Activated naive CD4-positive, alpha-beta T cell treated with anti-CD3 and anti-CD28 coated beads for 36 hours (primary cell): ENCODE measurements at regions of chr12 and their contacts with region 1.

Region 1: DNA sequence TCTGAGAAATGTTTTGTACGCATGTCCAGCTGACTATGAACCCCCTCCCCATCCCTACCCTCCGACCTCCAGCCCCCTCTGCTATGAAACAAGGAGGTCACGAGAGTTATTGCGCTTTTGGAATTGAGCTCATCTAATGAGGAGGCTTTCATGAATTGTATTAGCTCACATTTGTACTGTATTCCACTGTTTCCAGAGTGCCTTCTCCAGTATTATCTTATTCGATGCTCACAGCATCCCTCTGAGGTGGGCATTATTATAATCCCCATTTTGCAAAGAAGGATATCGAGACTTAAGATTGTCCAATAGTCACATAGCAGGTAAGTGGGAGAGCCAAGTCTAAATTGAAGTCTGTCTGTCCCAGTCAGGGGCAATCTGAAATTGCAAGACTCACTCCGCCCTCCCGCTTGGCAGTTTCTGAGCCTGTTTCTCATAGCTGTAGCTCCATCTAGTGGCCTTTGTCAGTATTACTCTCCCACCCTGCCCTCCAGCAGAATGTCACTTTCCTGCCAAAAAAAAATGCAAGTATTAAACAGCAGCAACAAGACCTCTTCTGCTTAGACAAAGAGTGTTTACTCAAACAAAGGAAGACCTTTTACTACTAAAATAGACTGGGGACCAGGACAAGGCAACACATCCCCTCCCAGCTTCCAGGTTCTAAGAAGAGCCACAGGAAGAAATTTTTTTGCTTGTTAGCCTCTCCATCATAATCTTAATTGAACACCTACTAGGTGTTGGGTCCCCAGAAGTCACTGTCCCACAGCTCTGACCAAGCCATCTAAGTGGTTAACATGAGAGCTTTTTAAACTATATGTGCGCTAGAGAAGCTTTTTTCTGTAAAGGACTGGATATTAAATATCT is 48.6 kb upstream of the TMEM233 start:
- DNase-seq: peak; percentile 73
- H3K4me3 Mint-ChIP-seq: no peak overlapping the region
- H3K27ac Mint-ChIP-seq: no peak overlapping the region
- H3K4me1 Mint-ChIP-seq: no peaks in the 10 kb centered on the region
- H3K27me3 Mint-ChIP-seq: peaks cover 28% of the 10 kb centered on the region

Region 2: DNA sequence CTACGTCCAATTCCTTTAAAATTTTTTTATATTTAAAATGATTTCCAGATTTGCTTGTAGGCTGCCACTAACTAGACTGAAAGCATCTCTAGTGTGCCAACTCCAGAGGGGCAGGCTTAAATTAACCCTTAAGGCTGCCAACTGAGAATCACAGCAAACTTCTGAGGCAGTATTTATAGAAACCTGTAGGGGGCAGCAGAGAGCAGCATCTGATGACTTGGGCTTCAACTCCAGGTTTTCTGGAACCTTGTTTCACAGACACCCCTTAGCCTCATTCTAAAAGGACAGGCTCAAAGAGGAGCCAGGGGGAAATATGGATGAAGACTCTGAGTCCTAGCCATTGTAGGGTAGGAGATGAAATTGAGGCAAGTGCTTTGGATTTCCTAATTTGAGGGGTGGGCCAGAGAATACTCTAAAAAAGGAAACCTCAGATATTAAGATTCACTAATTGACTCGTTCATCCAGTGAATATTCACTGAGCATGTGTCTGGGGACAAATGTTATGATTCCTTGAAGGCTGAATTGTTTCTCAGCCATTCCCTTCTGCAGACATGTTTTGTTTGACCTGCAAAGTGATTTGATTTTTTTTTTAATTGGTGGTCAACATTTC is 429.6 kb before region 1 on chr12:
- CTCF ChIA-PET with region 1: no interaction called
- intact Hi-C with region 1: loop called (anchors 10 kb)
- DNase-seq: peak; percentile 43
- H3K4me3 Mint-ChIP-seq: no peak overlapping the region
- H3K27ac Mint-ChIP-seq: no peak overlapping the region
- H3K4me1 Mint-ChIP-seq: no peaks in the 10 kb centered on the region
- H3K27me3 Mint-ChIP-seq: peaks cover 6% of the 10 kb centered on the region

Region 3: DNA sequence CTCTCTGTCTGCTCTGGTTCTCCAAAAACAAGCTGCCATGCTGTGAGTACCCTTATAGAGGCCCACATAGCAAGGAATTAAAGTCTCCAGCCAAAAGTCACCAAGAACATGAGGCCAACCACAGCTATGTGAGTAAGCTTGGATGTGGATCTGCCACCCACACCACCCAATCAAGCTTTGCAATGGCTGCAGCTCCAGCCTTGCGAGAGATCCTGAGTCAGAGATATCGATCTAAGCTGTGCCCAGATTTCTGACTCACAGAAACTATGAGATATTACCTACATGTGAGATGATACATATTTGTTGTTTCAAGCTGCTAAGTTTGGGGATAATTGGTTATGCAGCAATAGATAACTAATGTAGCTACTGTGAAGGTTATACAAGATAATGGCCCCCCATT is 33.1 kb after region 1 on chr12:
- CTCF ChIA-PET with region 1: no interaction called
- intact Hi-C with region 1: no loop called
- DNase-seq: no peak
- H3K4me3 Mint-ChIP-seq: no peak overlapping the region
- H3K27ac Mint-ChIP-seq: peak overlapping the region; percentile 1
- H3K4me1 Mint-ChIP-seq: no peaks in the 10 kb centered on the region
- H3K27me3 Mint-ChIP-seq: peaks cover 16% of the 10 kb centered on the region

Region 4: GRCh38 chr12:119631930-119632678 is 87.1 kb after region 1 on chr12:
- CTCF ChIA-PET with region 1: no interaction called
- intact Hi-C with region 1: no loop called
- DNase-seq: no peak
- H3K4me3 Mint-ChIP-seq: no peak overlapping the region
- H3K27ac Mint-ChIP-seq: no peak overlapping the region
- H3K4me1 Mint-ChIP-seq: no peaks in the 10 kb centered on the region
- H3K27me3 Mint-ChIP-seq: peaks cover 10% of the 10 kb centered on the region

Region 5: DNA sequence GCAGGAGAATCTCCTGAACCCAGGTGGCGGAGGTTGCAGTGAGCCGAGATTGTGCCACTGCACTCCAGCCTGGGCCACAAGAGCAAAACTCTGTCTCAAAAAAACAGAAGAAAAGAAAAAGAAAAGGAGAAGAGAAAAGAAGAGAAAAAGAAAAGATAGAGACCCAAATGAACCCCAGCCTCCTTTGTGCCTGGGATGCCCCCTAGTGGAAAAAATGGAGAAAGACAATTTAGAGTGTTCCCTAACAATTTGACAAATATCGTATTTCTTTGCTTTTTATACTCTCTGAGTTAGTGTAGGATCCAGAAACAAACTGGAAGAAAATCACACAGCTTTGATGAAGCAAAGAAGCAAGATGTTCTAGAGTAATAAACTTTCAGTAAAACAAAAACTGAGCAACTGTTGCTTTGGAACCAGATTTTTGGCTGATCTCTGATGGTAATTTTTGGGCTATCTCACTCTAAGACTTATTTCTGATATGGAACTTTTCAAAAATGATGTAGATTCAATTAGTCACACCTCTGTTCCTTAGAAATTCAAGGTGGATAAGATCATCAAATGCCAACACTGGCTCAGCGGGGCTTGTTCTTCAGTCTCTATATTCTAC is 104.3 kb after region 1 on chr12:
- CTCF ChIA-PET with region 1: interaction called, 5 read pairs
- intact Hi-C with region 1: loop called (anchors 5 kb)
- DNase-seq: no peak
- H3K4me3 Mint-ChIP-seq: no peak overlapping the region
- H3K27ac Mint-ChIP-seq: no peak overlapping the region
- H3K4me1 Mint-ChIP-seq: no peaks in the 10 kb centered on the region
- H3K27me3 Mint-ChIP-seq: no peaks in the 10 kb centered on the region